Spleen (tissue), 13 donors: ENCODE measurements at regions of chr12 and their contacts with region 1.

Region 1: DNA sequence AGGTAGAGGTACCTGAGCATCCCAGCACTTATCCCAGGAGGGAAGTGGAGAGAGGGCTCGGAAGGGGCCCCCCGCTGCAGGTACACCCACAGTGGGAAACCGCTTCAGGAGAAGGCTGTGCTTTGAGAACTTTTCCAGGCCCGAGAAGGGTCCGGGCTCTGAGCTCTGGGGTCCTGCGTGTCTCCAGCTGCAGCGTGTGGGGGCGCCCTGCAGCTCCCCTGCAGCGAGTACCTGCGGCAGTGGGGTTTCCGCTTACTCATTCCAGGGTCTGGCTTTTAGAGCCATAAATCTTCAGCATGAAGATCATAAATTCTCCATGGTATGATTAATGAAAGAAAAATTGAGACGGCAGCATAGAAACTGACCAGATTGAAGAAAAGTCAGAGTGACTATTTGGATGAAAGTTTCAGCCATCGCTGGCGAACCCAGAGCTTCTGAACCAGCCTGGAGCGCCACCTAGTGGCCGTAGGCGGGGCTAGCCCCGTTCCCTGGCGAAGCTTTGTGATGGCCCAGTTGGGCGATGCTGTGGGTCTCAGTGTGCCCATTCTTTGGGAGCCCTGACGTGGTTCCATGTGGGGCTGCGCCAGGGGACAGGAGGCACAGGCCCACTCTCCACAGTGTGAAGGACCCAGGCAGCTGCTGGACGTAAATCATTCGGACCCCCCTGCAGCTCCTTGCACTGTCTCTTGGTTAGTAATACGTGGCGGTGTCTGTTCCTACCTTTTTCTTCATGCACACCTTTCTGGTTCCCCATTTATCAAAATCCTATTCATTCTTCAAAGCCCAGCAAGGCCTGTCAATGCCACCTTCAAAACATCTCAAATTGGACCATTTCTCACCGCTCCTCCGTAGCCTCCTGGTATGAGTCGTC is 198.2 kb downstream of the TSPAN9 start:
- DNase-seq: peak; percentile 92
- H3K4me3 ChIP-seq: no peak overlapping the region
- H3K27ac ChIP-seq: no peak overlapping the region
- H3K4me1 ChIP-seq: peaks cover 3 to 51% (median 35%) of the 10 kb centered on the region in 6 donors
- H3K27me3 ChIP-seq: peaks cover 0 to 29% (median 0%) of the 10 kb centered on the region in 7 donors
- CTCF ChIP-seq: peak; percentile 70 to 98 (median 97)
- POLR2A ChIP-seq: no peak

Region 2: GRCh38 chr12:3073438-3074250 is 201.8 kb before region 1 on chr12:
- intact Hi-C with region 1: loop called (anchors 2 kb)
- DNase-seq: peak; percentile 94
- H3K4me3 ChIP-seq: no peak overlapping the region
- H3K27ac ChIP-seq: peak overlapping the region in 1 of 8 donors; percentile 33
- H3K4me1 ChIP-seq: peaks cover 0 to 39% (median 26%) of the 10 kb centered on the region in 6 donors
- H3K27me3 ChIP-seq: peaks cover 0 to 58% (median 4%) of the 10 kb centered on the region in 7 donors
- CTCF ChIP-seq: peak; percentile 79 to 99 (median 96)
- POLR2A ChIP-seq: no peak

Region 3: DNA sequence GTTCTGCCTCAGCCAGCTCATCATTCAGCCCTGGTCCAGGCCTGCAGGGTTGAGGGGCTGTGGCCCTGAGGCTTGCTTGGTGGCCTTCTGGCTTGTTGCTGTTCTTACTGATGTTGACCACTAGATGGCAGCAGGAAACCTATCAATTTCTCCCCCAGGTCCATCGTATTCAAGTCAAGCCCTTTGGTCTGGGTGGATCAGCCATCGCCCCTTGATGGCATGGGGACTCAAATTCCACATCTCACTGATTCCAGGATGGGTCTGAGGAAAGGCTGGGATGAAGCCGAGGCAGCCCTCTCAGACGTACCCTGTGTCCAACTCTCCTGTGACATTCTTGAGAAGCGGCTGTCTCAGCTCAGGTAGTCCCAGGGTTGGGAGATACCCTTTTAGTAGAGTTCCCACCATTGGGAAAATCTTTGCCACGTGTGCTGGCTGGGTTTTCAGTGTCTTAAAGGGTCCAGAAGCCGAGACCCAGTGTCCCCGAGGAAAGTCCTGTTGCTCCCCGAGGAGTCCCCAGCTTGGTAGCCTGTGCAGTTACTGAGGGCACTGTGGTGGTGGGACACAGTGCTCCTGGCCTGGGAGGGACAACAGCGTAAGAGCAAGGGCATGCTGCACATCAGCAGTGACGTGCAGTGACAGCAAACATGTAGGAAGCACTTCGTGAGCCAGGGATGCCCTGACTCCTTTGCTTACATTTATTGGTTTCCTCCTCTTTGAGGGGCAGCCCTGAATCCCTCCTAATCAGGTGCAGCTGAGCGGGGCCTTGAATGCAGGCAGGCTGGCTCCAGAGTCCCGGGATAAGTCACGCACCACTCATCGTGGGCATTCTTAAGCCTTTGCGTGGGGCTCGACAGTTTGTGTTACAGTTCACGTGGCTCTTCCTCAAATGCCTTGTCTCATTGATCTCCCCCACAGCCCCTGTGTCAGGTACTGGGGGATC is 139.6 kb before region 1 on chr12:
- intact Hi-C with region 1: loop called (anchors 5 kb)
- DNase-seq: no peak
- H3K4me3 ChIP-seq: no peak overlapping the region
- H3K27ac ChIP-seq: no peak overlapping the region
- H3K4me1 ChIP-seq: peaks cover 5 to 96% (median 49%) of the 10 kb centered on the region in 6 donors
- H3K27me3 ChIP-seq: peaks cover 0 to 57% (median 0%) of the 10 kb centered on the region in 7 donors
- CTCF ChIP-seq: peak; percentile 45 to 91 (median 81)
- POLR2A ChIP-seq: no peak

Region 4: DNA sequence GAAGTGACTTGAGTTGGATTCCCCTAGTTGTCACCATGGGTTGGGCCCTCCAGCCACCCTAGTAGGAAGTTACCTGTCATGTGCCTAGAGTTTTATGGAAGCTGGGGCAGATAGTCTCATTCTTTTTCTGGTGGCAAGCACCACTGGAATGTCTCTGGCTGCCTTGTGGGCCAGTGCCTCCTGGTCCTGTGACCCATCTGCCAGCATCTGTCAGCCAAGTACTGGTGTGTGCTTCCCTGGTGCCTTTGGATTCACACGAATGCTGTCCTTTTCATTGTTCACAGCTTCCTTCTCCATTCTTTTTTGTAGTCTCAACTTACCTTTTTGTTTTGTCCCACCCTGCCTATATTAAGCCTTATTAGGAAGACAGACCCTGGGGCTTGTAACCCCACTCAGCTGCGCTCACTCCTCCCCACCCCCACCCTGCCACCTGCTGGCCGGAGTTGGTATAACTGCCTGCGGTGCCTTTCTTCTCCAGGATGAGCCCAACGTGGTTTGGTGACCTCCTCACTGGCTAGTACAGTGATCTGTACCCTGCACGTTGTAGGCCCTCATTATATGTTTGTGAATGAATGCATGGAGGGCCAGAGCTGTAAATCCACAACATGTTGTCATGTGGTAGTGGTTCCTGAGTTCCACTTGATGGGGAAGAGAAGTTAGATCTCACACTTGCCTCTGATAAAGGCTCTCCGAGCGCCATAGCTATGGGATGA is 72.5 kb before region 1 on chr12:
- intact Hi-C with region 1: no loop called
- DNase-seq: no peak
- H3K4me3 ChIP-seq: no peak overlapping the region
- H3K27ac ChIP-seq: no peak overlapping the region
- H3K4me1 ChIP-seq: peaks cover 16 to 81% (median 54%) of the 10 kb centered on the region in 6 donors
- H3K27me3 ChIP-seq: peaks cover 0 to 60% (median 35%) of the 10 kb centered on the region in 7 donors
- CTCF ChIP-seq: peak; percentile 55 to 91 (median 83)
- POLR2A ChIP-seq: no peak

Region 5: GRCh38 chr12:3571724-3572123 is 296.3 kb after region 1 on chr12:
- intact Hi-C with region 1: no loop called
- DNase-seq: no peak
- H3K4me3 ChIP-seq: no peak overlapping the region
- H3K27ac ChIP-seq: no peak overlapping the region
- H3K4me1 ChIP-seq: no peaks in the 10 kb centered on the region
- H3K27me3 ChIP-seq: peaks cover 0 to 14% (median 0%) of the 10 kb centered on the region in 7 donors
- CTCF ChIP-seq: no peak
- POLR2A ChIP-seq: no peak